CD14-positive monocyte (primary cell): ENCODE measurements at regions of chr3 and their contacts with region 1.

Region 1: DNA sequence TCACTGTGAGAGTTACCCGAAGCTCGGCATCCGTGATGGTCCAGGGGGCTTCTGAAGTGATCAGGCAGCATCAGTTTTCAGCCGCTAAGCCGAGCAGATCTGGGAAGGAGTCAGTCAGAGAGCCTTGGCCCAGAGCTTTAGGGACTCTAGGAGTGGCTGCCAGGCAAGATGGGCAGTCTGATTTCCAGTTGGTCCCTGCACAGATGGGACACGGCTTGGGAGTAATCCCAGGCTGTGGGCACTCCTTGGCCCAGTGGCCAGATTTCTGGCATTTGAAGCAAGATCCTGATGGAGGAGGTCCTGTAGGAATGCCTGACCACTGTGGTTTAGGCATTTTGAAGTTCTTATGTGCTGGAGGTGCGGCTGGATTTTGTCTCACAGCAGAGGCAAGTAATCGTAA is 10.5 kb upstream of the IP6K2 start:
- DNase-seq: no peak
- H3K4me3 ChIP-seq: no peak overlapping the region
- H3K4me3 Mint-ChIP-seq: no peak overlapping the region
- H3K27ac ChIP-seq: no peak overlapping the region
- H3K27ac Mint-ChIP-seq: no peak overlapping the region
- H3K4me1 ChIP-seq: no peaks in the 10 kb centered on the region
- H3K4me1 Mint-ChIP-seq: peaks cover 5% of the 10 kb centered on the region
- H3K27me3 ChIP-seq: no peaks in the 10 kb centered on the region
- H3K27me3 Mint-ChIP-seq: peaks cover 0 to 3% (median 1%) of the 10 kb centered on the region in 3 donors
- CTCF ChIP-seq: no peak

Region 2: DNA sequence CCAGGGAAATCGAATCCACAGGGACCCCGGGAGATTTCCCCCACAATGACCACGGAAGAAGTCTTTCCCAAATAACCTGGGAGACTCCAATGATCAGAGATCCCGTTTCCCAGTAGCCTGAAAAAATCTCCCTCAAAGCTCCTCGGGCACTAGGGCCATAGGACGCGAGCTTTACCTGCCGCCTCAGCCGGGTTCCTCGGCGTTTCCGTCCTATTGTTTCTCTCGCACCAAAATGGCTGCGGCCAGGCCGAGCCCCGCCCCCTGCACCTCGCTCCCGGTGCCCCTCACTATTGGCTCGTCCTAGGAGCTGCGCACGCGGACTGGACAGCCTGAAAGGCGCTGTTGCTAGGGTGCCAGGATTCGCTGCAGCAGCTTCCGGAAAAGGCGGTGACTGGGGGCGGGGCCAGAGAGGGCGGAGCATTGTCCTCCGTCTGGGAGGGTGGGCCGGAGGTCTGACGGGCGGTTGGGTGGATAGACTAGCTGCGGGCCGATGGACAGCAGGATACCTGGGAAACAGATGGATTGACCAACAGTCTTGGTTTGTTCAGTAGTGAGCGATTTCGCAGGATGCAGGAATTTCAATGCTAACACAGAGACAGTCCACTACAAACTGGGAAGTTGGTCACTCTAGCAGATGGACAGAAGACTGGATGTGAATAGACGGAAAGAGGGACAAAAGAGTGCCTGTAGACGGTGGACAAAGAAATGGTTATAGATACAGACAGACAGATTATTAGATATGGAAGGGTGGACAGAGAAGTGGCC is 10.3 kb before region 1 on chr3 and contains the start of gene IP6K2:
- intact Hi-C with region 1: no loop called
- DNase-seq: peak; percentile 95 to 99 (median 96)
- H3K4me3 ChIP-seq: peak within 1 kb of the TSS; percentile 87 to 99 (median 91)
- H3K4me3 Mint-ChIP-seq: peak within 1 kb of the TSS; percentile 99
- H3K27ac ChIP-seq: peak within 1 kb of the TSS; percentile 67 to 92
- H3K27ac Mint-ChIP-seq: peak within 1 kb of the TSS; percentile 95 to 99 (median 97)
- H3K4me1 ChIP-seq: peaks cover 10 to 29% of the 10 kb centered on the region in 2 donors
- H3K4me1 Mint-ChIP-seq: peaks cover 25% of the 10 kb centered on the region
- H3K27me3 ChIP-seq: no peaks in the 10 kb centered on the region
- H3K27me3 Mint-ChIP-seq: peaks cover 5 to 9% (median 6%) of the 10 kb centered on the region in 3 donors
- CTCF ChIP-seq: no peak
- polyA plus RNA-seq, gene IP6K2: 16.5 to 53.8 (median 18.7) TPM

Region 3: DNA sequence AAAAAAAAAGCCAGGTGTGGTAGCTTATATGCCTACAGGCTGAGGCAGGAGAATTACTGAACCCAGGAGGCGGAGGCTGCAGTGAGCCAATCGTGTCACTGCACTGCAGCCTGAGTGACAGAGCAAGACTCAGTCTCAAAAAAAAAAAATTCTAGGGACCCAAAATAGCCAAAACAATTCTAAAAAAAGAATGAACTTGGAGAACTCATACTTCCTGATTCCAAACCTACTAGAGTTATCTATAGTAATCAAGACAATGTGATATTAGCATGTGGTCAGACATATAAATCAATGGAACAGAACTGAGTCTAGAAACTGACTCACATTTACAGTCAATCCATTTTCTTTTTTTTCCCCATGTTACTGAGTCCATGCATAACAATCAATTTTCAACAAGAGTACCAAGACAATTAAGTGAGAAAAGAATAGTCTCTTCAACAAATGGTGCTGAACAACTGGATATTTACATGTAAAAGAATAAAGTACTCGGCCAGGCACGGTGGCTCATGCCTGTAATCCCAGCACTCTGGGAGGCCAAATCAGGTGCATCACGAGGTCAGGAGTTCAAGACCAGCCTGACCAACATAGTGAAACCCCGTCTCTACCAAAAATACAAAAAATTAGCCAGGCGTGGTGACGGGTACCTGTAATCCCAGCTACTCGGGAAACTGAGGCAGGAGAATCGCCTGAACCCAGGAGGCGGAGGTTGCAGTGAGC is 108.3 kb after region 1 on chr3:
- intact Hi-C with region 1: loop called in 1 of 2 experiments (anchors 10 kb)
- DNase-seq: no peak
- H3K4me3 ChIP-seq: no peak overlapping the region
- H3K4me3 Mint-ChIP-seq: no peak overlapping the region
- H3K27ac ChIP-seq: no peak overlapping the region
- H3K27ac Mint-ChIP-seq: peak overlapping the region in 3 of 7 donors; percentile 37 to 41 (median 40)
- H3K4me1 ChIP-seq: no peaks in the 10 kb centered on the region
- H3K4me1 Mint-ChIP-seq: peaks cover 16% of the 10 kb centered on the region
- H3K27me3 ChIP-seq: no peaks in the 10 kb centered on the region
- H3K27me3 Mint-ChIP-seq: no peaks in the 10 kb centered on the region
- CTCF ChIP-seq: no peak